MCF 10A (cell line): ENCODE measurements at regions of chr10 and their contacts with region 1.

Region 1: GRCh38 chr10:12782537-12782936 is 219.0 kb downstream of the CCDC3 start:
- DNase-seq: peak; percentile 56
- H3K4me3 Mint-ChIP-seq: no peak overlapping the region
- H3K27ac Mint-ChIP-seq: no peak overlapping the region
- H3K4me1 Mint-ChIP-seq: no peaks in the 10 kb centered on the region
- H3K27me3 Mint-ChIP-seq: no peaks in the 10 kb centered on the region
- CTCF ChIP-seq: peak; percentile 61

Region 2: GRCh38 chr10:12771981-12772760 is 10.4 kb before region 1 on chr10:
- CTCF ChIA-PET with region 1: interaction called, 14 read pairs
- POLR2A ChIA-PET with region 1: no interaction called
- intact Hi-C with region 1: no loop called
- DNase-seq: no peak
- H3K4me3 Mint-ChIP-seq: no peak overlapping the region
- H3K27ac Mint-ChIP-seq: no peak overlapping the region
- H3K4me1 Mint-ChIP-seq: no peaks in the 10 kb centered on the region
- H3K27me3 Mint-ChIP-seq: no peaks in the 10 kb centered on the region
- CTCF ChIP-seq: no peak

Region 3: GRCh38 chr10:12800302-12800701 is 17.8 kb after region 1 on chr10:
- CTCF ChIA-PET with region 1: no interaction called
- POLR2A ChIA-PET with region 1: no interaction called
- intact Hi-C with region 1: no loop called
- DNase-seq: no peak
- H3K4me3 Mint-ChIP-seq: no peak overlapping the region
- H3K27ac Mint-ChIP-seq: no peak overlapping the region
- H3K4me1 Mint-ChIP-seq: no peaks in the 10 kb centered on the region
- H3K27me3 Mint-ChIP-seq: no peaks in the 10 kb centered on the region
- CTCF ChIP-seq: no peak

Region 4: GRCh38 chr10:14385596-14386593 is 1603.4 kb after region 1 on chr10:
- CTCF ChIA-PET with region 1: no interaction called
- POLR2A ChIA-PET with region 1: no interaction called
- intact Hi-C with region 1: loop called (anchors 10 kb)
- DNase-seq: peak; percentile 72
- H3K4me3 Mint-ChIP-seq: peak overlapping the region; percentile 8
- H3K27ac Mint-ChIP-seq: no peak overlapping the region
- H3K4me1 Mint-ChIP-seq: peaks cover 5% of the 10 kb centered on the region
- H3K27me3 Mint-ChIP-seq: no peaks in the 10 kb centered on the region
- CTCF ChIP-seq: no peak